ENCODE measurements at regions of chr9 and their contacts with region 1.

Region 1: GRCh38 chr9:94139672-94140417 is 55.6 kb downstream of the PTPDC1 start:
- DNase-seq: peak; percentile 88 to 92 (median 90)
- ATAC-seq: peak; percentile 72 to 91 (median 78)
- H3K4me3 ChIP-seq: peak overlapping the region in 7 of 12 donors; percentile 1 to 31 (median 20)
- H3K27ac ChIP-seq: peak overlapping the region; percentile 53 to 91 (median 82)
- H3K4me1 ChIP-seq: peaks cover 0 to 46% (median 35%) of the 10 kb centered on the region in 12 donors
- H3K27me3 ChIP-seq: no peaks in the 10 kb centered on the region
- CTCF ChIP-seq: no peak
- POLR2A ChIP-seq: no peak

Region 2: DNA sequence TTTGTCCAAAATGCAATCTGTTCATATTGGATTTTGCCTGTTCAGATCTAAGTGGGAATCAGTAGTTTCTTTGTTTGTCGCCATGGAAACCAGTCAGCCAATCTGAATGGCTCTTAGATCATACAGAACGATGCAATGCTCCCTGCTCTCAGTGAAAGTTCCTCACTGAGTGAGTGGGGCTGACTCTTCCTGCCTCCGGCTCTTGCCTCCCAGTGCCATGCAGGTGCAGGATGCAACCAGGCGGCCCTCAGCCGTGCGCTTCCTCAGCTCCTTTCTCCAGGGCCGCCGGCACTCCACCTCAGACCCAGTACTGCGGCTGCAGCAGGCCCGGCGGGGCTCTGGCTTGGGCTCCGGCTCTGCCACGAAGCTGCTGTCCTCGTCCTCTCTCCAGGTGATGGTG is 55.5 kb before region 1 on chr9 and contains the start of gene PTPDC1:
- intact Hi-C with region 1: loop called in 5 of 10 experiments (anchors 2 to 10 kb)
- DNase-seq: peak in 1 of 5 donors; percentile 21
- ATAC-seq: peak in 3 of 4 donors; percentile 42 to 54 (median 52)
- H3K4me3 ChIP-seq: peak within 1 kb of the TSS in 5 of 12 donors; percentile 16 to 43 (median 26)
- H3K27ac ChIP-seq: peak within 1 kb of the TSS in 9 of 12 donors; percentile 15 to 76 (median 53)
- H3K4me1 ChIP-seq: peaks cover 0 to 45% (median 31%) of the 10 kb centered on the region in 12 donors
- H3K27me3 ChIP-seq: no peaks in the 10 kb centered on the region
- CTCF ChIP-seq: no peak
- POLR2A ChIP-seq: no peak
- total RNA-seq, gene PTPDC1: 6.4 to 12.3 (median 9.5) TPM

Region 3: DNA sequence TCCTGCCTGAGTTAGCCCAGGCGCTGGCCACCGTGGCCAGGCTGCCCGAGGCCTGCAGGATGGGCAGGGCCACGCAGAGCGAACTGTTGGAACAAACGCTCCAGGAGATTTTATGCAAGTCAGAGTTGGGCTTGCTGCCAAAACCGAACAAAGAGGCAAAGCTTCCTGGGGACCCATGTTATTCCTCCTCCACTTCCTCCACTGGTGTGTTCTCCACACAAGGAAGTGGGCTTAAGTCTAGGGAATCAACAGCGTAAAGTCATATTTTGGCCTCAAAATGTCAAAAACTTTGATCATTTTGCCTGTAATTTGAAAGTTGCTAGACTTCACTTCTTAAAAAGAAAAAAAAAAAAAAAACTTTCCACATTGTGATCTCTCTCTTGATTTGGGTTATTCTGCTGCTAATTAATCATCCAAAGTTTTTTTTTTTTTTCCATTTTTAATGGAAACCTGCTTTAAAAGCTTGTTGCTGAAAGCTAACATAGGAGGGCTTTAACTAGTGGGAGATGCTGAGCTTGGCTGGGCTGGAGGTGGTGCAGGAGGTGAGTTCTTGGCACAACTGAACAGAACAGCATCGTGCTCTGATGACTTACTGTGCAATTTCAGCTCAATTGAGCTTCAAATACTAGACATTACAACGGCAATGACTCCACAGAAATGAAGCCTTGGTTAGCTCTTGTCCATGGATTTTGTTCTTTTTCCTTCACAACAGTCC is 17.4 kb after region 1 on chr9:
- intact Hi-C with region 1: loop called in 1 of 10 experiments (anchors 1 kb)
- DNase-seq: peak; percentile 78 to 92 (median 87)
- ATAC-seq: peak; percentile 72 to 91 (median 82)
- H3K4me3 ChIP-seq: no peak overlapping the region
- H3K27ac ChIP-seq: peak overlapping the region; percentile 12 to 77 (median 62)
- H3K4me1 ChIP-seq: peaks cover 2 to 31% (median 23%) of the 10 kb centered on the region in 12 donors
- H3K27me3 ChIP-seq: no peaks in the 10 kb centered on the region
- CTCF ChIP-seq: no peak
- POLR2A ChIP-seq: no peak

Region 4: GRCh38 chr9:94166237-94166963 is 26.6 kb after region 1 on chr9:
- intact Hi-C with region 1: loop called in 2 of 10 experiments (anchors 2 kb)
- DNase-seq: peak; percentile 98 to 99 (median 99)
- ATAC-seq: peak; percentile 83 to 88 (median 84)
- H3K4me3 ChIP-seq: peak overlapping the region; percentile 50 to 91 (median 86)
- H3K27ac ChIP-seq: peak overlapping the region; percentile 97 to 100 (median 100)
- H3K4me1 ChIP-seq: peaks cover 3 to 47% (median 38%) of the 10 kb centered on the region in 12 donors
- H3K27me3 ChIP-seq: no peaks in the 10 kb centered on the region
- CTCF ChIP-seq: peak in 5 of 12 donors; percentile 22 to 51 (median 29)
- POLR2A ChIP-seq: peak; percentile 83 to 97

Region 5: GRCh38 chr9:94178927-94179326 is 39.1 kb after region 1 on chr9:
- intact Hi-C with region 1: loop called in 1 of 10 experiments (anchors 5 kb)
- DNase-seq: no peak
- ATAC-seq: no peak
- H3K4me3 ChIP-seq: no peak overlapping the region
- H3K27ac ChIP-seq: peak overlapping the region in 1 of 12 donors; percentile 3
- H3K4me1 ChIP-seq: peaks cover 22 to 85% (median 65%) of the 10 kb centered on the region in 12 donors
- H3K27me3 ChIP-seq: no peaks in the 10 kb centered on the region
- CTCF ChIP-seq: no peak
- POLR2A ChIP-seq: no peak